Cardiac septum (tissue), 1 donor: ENCODE measurements at regions of chr1 and their contacts with region 1.

Region 1: DNA sequence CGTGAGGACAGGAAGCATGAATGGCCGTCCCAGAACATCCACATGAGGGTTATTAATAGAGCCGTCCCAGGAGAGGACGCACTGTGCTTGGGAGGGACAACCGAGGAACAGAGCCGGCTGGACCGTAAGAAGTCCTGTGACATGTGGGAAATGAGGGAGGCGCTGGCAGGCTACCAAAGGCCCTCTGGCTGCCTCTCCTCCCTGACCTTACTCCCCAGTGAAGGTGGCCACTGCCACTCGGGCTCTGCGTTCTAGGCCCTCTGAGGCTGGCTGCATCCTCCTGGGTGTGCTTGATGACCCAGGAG is 15.5 kb upstream of the NPPB start:
- DNase-seq: peak; percentile 92

Region 2: DNA sequence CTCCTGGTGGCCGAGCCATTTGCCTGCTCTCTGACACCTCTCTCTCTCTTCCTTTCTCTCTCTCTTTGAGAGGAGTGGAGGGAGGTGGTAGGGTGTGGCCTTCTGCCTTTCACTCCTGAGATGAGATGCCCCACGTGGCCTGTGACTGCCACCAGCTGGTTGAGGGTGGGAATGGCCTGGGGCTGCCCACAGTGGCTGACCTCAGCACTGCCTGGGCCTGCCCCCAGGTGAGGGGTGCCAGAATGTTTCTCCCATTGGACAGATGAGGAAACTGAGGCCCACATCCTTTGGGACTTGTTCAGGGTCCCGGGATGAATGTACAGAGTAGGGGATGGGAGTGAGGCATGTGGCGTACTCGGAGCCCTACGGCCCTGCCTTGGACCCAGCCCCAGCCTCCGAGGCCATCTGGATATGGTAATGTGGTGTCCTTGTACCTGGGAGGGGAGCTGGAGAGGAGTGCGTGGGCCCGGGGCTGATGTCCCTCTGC is 125.0 kb before region 1 on chr1:
- intact Hi-C with region 1: no loop called
- DNase-seq: peak; percentile 88

Region 3: GRCh38 chr1:11858968-11859871 is 15.0 kb before region 1 on chr1:
- intact Hi-C with region 1: loop called (anchors 1 kb)
- DNase-seq: peak; percentile 89

Region 4: DNA sequence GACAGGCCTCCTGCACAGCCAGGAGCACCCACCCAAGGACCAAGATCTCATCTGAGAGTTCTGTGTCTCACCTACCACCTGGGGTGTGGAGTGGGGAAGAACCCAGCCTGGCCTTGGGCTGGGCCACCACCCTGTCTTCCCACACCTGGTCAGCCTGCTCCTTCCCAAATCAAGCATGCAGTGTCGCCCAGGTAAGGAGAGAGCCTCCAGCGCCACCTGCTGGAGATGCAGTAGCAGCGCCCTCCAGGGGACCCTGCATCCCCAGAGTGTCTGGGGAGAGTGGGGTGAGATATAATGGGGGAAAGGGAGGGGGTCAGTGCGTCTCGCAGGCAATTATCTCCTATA is 19.7 kb after region 1 on chr1:
- intact Hi-C with region 1: loop called (anchors 2 kb)
- DNase-seq: peak; percentile 87